ENCODE measurements at regions of chr12 and their contacts with region 1.

Region 1: GRCh38 chr12:54398995-54399793 is 14.7 kb upstream of the ZNF385A start:
- DNase-seq: peak; percentile 92
- ATAC-seq: peak; percentile 91
- H3K4me3 Mint-ChIP-seq: no peak overlapping the region
- H3K27ac Mint-ChIP-seq: no peak overlapping the region
- H3K4me1 Mint-ChIP-seq: peaks cover 29% of the 10 kb centered on the region
- H3K27me3 Mint-ChIP-seq: no peaks in the 10 kb centered on the region

Region 2: GRCh38 chr12:54388235-54389138 is 10.7 kb before region 1 on chr12:
- CTCF ChIA-PET with region 1: interaction called, 34 read pairs
- POLR2A ChIA-PET with region 1: no interaction called
- DNase-seq: no peak
- ATAC-seq: no peak
- H3K4me3 Mint-ChIP-seq: no peak overlapping the region
- H3K27ac Mint-ChIP-seq: no peak overlapping the region
- H3K4me1 Mint-ChIP-seq: peaks cover 15% of the 10 kb centered on the region
- H3K27me3 Mint-ChIP-seq: peaks cover 2% of the 10 kb centered on the region

Region 3: GRCh38 chr12:54419088-54419892 is 20.1 kb after region 1 on chr12 and contains the start of gene ITGA5:
- CTCF ChIA-PET with region 1: interaction called, 270 read pairs
- POLR2A ChIA-PET with region 1: interaction called, 13 read pairs
- DNase-seq: no peak
- ATAC-seq: peak; percentile 54
- H3K4me3 Mint-ChIP-seq: peak within 1 kb of the TSS; percentile 94
- H3K27ac Mint-ChIP-seq: peak within 1 kb of the TSS; percentile 91
- H3K4me1 Mint-ChIP-seq: peaks cover 54% of the 10 kb centered on the region
- H3K27me3 Mint-ChIP-seq: peaks cover 28% of the 10 kb centered on the region
- total RNA-seq, gene ITGA5: 65.0 to 69.1 TPM

Region 4: DNA sequence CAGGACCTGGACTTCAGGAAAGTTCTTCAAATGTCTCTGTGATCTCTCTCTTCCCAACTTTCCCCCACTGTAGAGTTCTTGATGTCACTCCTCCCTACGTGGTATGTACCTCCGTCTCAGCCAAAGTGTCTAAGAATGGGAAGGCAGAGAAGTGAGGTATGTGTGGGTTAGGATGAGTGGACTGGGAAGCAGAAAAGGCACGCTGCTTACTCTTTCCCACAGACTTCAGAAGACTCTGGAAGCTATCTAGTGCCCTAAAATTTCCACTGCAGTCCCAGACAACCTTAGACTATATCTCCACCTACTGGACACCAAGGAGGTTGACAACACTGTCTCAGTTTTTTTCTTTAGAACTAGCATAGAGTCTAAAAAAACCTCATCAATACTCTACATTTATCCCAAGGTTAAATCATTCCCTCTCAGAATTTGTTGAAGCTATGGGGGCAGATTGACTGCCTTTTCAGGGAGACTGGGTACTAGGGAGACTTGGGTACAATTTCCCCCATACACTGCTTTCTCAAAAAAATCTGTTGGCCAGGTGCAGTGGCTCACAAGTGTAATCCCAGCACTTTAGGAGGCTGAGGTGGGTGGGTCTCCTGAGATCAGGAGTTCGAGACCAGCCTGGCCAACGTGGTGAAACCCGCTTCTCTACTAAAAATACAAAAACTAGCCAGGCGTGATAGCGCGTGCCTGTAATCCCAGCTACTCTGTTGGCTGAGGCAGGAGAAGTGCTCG is 40.5 kb after region 1 on chr12:
- CTCF ChIA-PET with region 1: interaction called, 505 read pairs
- POLR2A ChIA-PET with region 1: interaction called, 19 read pairs
- DNase-seq: no peak
- ATAC-seq: peak; percentile 86
- H3K4me3 Mint-ChIP-seq: no peak overlapping the region
- H3K27ac Mint-ChIP-seq: peak overlapping the region; percentile 23
- H3K4me1 Mint-ChIP-seq: peaks cover 6% of the 10 kb centered on the region
- H3K27me3 Mint-ChIP-seq: peaks cover 12% of the 10 kb centered on the region

Region 5: GRCh38 chr12:54463034-54463433 is 63.8 kb after region 1 on chr12:
- CTCF ChIA-PET with region 1: interaction called, 14 read pairs
- POLR2A ChIA-PET with region 1: no interaction called
- DNase-seq: no peak
- ATAC-seq: no peak
- H3K4me3 Mint-ChIP-seq: no peak overlapping the region
- H3K27ac Mint-ChIP-seq: no peak overlapping the region
- H3K4me1 Mint-ChIP-seq: no peaks in the 10 kb centered on the region
- H3K27me3 Mint-ChIP-seq: peaks cover 38% of the 10 kb centered on the region

Region 6: DNA sequence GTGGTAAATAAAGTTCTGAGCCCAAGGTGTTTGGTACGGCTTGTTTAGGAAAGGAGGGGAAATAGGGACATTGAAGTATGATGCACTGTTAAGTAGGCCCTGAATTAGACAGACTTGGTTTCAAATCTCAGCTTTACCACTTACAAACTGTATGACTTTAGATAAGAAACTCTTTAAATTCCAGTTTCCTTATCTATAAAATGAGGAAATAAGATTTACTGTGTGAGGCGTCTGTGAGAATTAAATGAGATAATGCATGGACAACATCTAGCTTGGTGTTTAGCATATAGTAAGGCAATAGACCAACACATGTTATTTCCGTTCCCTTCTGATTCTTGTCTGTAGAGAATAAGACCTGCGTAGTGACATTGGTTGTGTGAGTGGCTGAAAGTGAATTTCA is 105.4 kb after region 1 on chr12:
- CTCF ChIA-PET with region 1: interaction called, 12 read pairs
- POLR2A ChIA-PET with region 1: interaction called, 3 read pairs
- DNase-seq: no peak
- ATAC-seq: no peak
- H3K4me3 Mint-ChIP-seq: no peak overlapping the region
- H3K27ac Mint-ChIP-seq: no peak overlapping the region
- H3K4me1 Mint-ChIP-seq: peaks cover 38% of the 10 kb centered on the region
- H3K27me3 Mint-ChIP-seq: no peaks in the 10 kb centered on the region